PC-3 (cell line): ENCODE measurements at regions of chr20 and their contacts with region 1.

Region 1: DNA sequence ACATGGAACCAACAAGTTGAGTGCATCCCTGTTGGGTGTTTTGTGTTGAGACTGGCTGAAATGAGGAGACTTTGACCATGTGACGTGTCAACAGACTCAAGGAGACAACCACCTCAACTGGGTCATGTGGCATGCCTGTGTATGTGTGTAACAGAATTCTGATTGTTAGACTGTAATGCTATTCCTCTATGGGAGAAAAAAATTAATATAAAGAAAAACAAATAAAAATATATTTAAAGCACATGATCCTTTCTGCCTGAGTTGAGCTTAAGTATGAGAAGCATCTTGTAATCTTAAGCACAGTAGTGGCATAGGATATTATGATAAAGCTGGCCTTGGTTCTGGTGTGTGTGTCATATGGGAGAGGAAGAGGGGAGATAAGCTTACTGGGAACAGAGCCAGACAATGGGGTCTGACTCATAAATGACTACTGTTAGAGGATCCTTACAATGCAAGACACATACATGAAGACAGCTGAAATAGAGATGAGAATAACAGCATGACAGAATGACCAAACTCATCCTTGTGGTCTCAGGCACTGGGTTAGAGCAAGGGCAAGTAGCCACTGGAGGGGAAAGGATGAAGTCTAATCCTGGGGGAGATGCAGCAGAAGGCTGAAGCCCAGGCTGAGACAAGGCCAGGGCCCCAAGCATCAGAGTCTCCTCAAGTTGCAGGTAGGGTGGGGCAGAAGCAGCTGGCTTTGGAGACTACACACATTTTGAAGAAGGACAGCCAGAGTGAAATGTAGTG is 9.2 kb downstream of the TP53INP2 start:
- DNase-seq: peak; percentile 99
- ATAC-seq: peak; percentile 53
- H3K4me3 ChIP-seq: no peak overlapping the region
- H3K27ac ChIP-seq: peak overlapping the region; percentile 48
- H3K4me1 ChIP-seq: peaks cover 33% of the 10 kb centered on the region
- H3K27me3 ChIP-seq: no peaks in the 10 kb centered on the region
- CTCF ChIP-seq: no peak

Region 2: DNA sequence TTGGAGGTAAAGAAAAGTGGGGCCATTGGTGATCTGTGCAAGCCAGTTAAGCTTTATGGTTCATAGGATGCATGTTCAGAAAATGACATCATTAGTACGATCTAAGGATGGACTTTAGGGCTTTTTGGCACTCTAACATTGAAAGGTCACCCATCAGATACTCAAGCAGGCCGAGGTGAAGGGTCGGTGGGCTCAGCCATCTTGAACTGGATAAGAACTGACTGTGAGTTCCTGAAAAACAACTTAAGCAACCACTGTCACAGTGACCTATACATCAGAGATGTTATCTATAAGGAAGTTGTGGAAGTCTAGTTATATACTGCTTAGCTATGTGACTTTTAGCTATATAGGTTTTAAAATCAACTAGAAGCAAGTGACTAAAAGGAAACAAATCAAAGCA is 363.3 kb before region 1 on chr20:
- CTCF ChIA-PET with region 1: no interaction called
- POLR2A ChIA-PET with region 1: interaction called, 11 read pairs
- intact Hi-C with region 1: no loop called
- DNase-seq: peak; percentile 56
- ATAC-seq: peak; percentile 63
- H3K4me3 ChIP-seq: no peak overlapping the region
- H3K27ac ChIP-seq: peak overlapping the region; percentile 73
- H3K4me1 ChIP-seq: peaks cover 14% of the 10 kb centered on the region
- H3K27me3 ChIP-seq: no peaks in the 10 kb centered on the region
- CTCF ChIP-seq: no peak